ENCODE measurements at regions of chr10 and their contacts with region 1.

Region 1: DNA sequence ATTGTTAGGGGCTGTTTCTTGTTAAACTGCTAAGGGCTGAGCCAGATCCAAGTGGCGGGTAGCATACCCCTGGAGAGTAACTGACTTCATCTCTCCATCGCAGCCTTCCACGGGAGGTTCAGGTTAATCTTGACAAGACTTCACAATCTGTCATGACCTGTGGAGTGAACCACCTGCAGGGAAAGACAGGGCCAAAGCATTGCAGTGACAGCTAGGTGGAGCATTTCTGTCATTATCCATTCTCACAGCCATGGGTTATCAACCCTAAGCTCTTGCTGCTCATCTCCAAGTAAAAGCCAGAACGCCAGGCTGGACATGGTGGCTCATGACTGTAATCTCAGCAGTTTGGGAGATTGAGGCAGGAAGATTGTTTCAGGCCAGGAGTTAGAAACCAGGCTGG is 17.2 kb downstream of the ABCC2 start:
- DNase-seq: no peak
- H3K4me3 ChIP-seq: no peak overlapping the region
- H3K27ac ChIP-seq: no peak overlapping the region
- H3K4me1 ChIP-seq: no peaks in the 10 kb centered on the region
- H3K27me3 ChIP-seq: no peaks in the 10 kb centered on the region
- CTCF ChIP-seq: no peak

Region 2: DNA sequence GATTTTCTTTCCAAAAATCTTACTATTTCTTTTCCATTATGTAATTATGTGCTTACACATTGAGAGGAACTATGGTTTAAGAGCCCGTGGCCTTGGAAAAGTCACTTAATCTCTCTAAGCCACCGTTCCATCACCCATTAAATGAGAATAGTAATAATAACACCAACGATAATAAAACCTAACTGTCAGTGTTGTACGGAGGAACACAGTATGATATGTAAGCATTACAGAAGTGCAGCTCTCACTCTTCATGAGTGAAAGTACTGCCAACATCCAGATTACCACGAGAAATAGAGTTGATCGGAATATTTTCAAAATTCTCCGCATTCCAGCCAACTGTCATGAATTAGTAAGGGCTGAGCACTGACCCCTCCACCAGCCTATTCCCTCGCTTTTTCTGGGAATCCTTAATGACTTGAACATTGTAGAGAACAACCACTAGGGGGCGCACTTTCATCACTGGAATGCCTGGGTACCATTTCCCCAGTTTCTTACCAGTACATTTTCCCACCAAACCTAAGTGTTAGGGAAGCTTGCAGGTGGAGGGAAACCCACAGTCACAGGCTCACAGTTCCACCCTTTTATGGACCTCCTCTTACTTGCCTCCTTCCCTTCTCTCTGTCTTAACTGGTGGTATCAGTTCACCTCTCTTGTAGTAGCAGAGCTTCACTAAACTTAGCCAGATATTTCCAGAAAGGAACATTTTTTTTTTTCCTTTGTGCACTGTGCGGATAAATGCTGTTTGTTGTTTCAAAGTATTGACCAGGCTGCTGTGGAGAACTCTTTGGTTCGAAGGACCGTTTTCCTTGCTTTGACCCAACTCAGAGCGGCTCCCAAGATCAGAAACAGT is 239.1 kb before region 1 on chr10:
- CTCF ChIA-PET with region 1: no interaction called
- dilution Hi-C with region 1: no loop called
- in situ Hi-C with region 1: no loop called
- intact Hi-C with region 1: no loop called
- DNase-seq: peak; percentile 32
- H3K4me3 ChIP-seq: no peak overlapping the region
- H3K27ac ChIP-seq: no peak overlapping the region
- H3K4me1 ChIP-seq: peaks cover 4% of the 10 kb centered on the region
- H3K27me3 ChIP-seq: no peaks in the 10 kb centered on the region
- CTCF ChIP-seq: peak; percentile 78 to 80

Region 3: GRCh38 chr10:99758211-99758891 is 41.3 kb before region 1 on chr10:
- CTCF ChIA-PET with region 1: no interaction called
- dilution Hi-C with region 1: loop called (anchors 5 kb)
- in situ Hi-C with region 1: no loop called
- intact Hi-C with region 1: no loop called
- DNase-seq: no peak
- H3K4me3 ChIP-seq: no peak overlapping the region
- H3K27ac ChIP-seq: no peak overlapping the region
- H3K4me1 ChIP-seq: peaks cover 9% of the 10 kb centered on the region
- H3K27me3 ChIP-seq: no peaks in the 10 kb centered on the region
- CTCF ChIP-seq: no peak

Measured in mammary epithelial cell (primary cell).